Breast epithelium (tissue), 4 donors: ENCODE measurements at regions of chr11 and their contacts with region 1.

Region 1: DNA sequence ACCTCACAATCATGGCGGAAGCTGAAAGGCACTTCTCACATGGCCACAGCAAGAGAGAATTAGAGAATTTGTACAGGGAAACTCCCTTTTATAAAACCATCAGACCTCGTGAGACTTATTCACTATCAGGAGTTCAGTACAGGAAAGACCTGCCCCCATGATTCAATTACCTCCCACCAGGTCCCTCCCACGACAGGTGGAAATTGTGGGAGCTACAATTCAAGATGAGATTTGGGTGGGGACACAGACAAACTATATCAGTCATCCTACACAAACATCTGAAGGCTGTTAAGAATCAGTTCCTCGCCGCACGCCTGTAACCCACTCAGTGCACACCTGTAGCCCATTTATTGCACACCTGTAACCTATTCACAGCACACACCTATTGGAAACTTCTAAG is 39.8 kb downstream of the CHST1 start:
- DNase-seq: no peak
- H3K4me3 ChIP-seq: no peak overlapping the region
- H3K27ac ChIP-seq: no peak overlapping the region
- H3K4me1 ChIP-seq: no peaks in the 10 kb centered on the region
- H3K27me3 ChIP-seq: peaks cover 0 to 5% of the 10 kb centered on the region in 2 donors
- CTCF ChIP-seq: no peak
- POLR2A ChIP-seq: no peak

Region 2: DNA sequence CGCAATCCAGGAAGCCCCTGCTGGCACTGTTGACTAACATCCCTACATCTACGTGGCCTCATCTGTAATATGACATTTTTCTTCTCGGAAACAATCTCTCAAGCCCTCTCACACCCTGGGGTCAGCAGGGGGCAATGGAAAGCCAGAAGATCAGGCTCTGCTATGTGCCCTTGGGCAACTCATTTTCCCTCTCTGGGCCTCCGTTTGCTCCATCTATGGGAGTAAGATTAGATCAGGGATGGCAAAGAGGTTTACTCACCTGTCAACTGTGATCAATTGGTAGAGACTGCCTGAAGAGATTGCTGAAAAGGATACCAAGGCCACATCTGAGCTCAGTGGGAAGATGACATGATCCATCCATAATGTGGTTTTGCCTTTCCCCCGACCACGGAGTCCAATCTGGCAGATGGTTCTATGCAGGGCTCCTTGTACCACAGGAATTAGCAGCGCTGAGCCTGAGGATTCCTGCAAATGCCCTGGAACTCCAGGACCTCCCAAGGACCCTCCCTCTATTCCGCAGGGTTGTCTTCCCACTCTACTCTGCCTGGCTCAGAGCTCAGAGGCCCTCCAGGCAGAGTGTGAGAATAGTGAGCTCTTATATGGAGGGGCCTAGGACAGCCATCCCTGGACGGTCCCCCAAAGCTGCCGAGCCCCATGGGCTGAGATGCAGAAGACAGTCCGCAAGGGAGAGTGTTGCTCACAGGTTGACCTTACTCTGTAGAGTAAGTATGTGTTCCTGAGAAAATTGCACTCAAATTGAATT is 26.2 kb before region 1 on chr11:
- intact Hi-C with region 1: loop called (anchors 2 kb)
- DNase-seq: no peak
- H3K4me3 ChIP-seq: no peak overlapping the region
- H3K27ac ChIP-seq: no peak overlapping the region
- H3K4me1 ChIP-seq: no peaks in the 10 kb centered on the region
- H3K27me3 ChIP-seq: peaks cover 0 to 3% of the 10 kb centered on the region in 2 donors
- CTCF ChIP-seq: no peak
- POLR2A ChIP-seq: no peak